Calu3 (cell line): ENCODE measurements at regions of chr21 and their contacts with region 1.

Region 1: GRCh38 chr21:22791986-22792560 is 1793.9 kb downstream of the NCAM2 start:
- DNase-seq: peak; percentile 2
- H3K4me3 Mint-ChIP-seq: no peak overlapping the region
- H3K27ac Mint-ChIP-seq: no peak overlapping the region
- H3K4me1 Mint-ChIP-seq: no peaks in the 10 kb centered on the region
- H3K27me3 Mint-ChIP-seq: no peaks in the 10 kb centered on the region
- CTCF ChIP-seq: peak; percentile 29

Region 2: GRCh38 chr21:20999659-21000058 is 1792.4 kb before region 1 on chr21:
- CTCF ChIA-PET with region 1: no interaction called
- intact Hi-C with region 1: loop called (anchors 10 kb)
- DNase-seq: no peak
- H3K4me3 Mint-ChIP-seq: no peak overlapping the region
- H3K27ac Mint-ChIP-seq: no peak overlapping the region
- H3K4me1 Mint-ChIP-seq: no peaks in the 10 kb centered on the region
- H3K27me3 Mint-ChIP-seq: no peaks in the 10 kb centered on the region
- CTCF ChIP-seq: no peak

Region 3: DNA sequence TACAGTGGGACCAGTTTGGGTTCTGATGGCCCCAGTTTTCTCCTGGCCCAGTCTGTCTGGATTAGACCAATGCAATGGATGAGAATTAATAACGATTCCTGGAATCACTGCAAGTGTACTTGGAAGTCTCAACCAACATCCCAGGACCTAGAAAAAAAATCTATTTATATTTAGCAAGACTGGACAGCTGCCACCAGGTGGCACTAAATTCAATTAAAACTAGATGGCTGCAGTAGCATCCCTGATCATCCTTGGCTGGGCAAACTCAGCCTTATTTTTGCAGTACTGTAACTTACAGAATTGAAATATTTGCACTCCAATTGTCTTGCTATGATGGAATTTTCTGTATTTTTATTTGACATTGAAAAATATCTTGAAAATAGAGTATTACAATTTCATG is 1628.2 kb before region 1 on chr21:
- CTCF ChIA-PET with region 1: no interaction called
- intact Hi-C with region 1: loop called (anchors 5 kb)
- DNase-seq: peak; percentile 11
- H3K4me3 Mint-ChIP-seq: no peak overlapping the region
- H3K27ac Mint-ChIP-seq: no peak overlapping the region
- H3K4me1 Mint-ChIP-seq: no peaks in the 10 kb centered on the region
- H3K27me3 Mint-ChIP-seq: no peaks in the 10 kb centered on the region
- CTCF ChIP-seq: peak; percentile 17

Region 4: GRCh38 chr21:22679207-22679606 is 112.9 kb before region 1 on chr21:
- CTCF ChIA-PET with region 1: no interaction called
- intact Hi-C with region 1: no loop called
- DNase-seq: no peak
- H3K4me3 Mint-ChIP-seq: no peak overlapping the region
- H3K27ac Mint-ChIP-seq: no peak overlapping the region
- H3K4me1 Mint-ChIP-seq: no peaks in the 10 kb centered on the region
- H3K27me3 Mint-ChIP-seq: no peaks in the 10 kb centered on the region
- CTCF ChIP-seq: no peak